Heart right ventricle (tissue), 16 donors: ENCODE measurements at regions of chr10 and their contacts with region 1.

Region 1: DNA sequence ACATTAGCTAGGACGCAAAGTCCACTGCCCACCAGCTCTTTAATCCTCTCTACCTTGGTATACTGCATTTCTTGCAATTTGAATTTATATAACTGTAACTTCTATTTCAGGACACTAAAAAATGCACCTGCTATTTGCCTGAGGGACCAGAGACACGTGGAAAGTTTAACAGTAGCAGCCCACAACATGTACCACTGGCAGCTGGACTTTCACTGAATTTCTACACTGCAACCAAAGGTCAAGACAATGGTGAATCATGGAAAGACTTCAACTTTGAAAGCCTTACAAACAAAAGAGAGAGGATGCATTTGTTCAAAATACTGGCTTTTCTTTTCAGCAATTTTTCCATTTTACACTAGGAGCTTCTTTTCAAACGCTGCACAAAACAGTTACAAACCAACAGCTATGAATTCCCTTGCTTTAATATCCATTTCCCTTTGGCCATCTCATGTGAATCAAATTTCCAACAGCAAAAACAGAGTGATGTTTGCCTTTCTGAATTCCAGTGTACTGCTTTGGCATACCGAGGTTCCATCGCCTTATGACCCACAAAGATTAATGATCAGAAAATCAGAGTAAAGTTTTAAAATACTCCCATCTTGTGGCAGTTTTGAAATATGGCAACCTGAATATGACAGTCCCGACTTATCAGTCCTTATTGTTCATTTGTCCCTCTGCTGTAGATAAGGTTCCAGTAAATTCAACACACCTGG is 29.9 kb upstream of the HNRNPH3 start:
- DNase-seq: no peak
- ATAC-seq: peak in 7 of 8 donors; percentile 52 to 78 (median 70)
- H3K4me3 ChIP-seq: no peak overlapping the region
- H3K27ac ChIP-seq: no peak overlapping the region
- H3K4me1 ChIP-seq: peaks cover 0 to 11% (median 0%) of the 10 kb centered on the region in 9 donors
- H3K27me3 ChIP-seq: no peaks in the 10 kb centered on the region
- CTCF ChIP-seq: peak in 8 of 9 donors; percentile 23 to 67 (median 58)

Region 2: DNA sequence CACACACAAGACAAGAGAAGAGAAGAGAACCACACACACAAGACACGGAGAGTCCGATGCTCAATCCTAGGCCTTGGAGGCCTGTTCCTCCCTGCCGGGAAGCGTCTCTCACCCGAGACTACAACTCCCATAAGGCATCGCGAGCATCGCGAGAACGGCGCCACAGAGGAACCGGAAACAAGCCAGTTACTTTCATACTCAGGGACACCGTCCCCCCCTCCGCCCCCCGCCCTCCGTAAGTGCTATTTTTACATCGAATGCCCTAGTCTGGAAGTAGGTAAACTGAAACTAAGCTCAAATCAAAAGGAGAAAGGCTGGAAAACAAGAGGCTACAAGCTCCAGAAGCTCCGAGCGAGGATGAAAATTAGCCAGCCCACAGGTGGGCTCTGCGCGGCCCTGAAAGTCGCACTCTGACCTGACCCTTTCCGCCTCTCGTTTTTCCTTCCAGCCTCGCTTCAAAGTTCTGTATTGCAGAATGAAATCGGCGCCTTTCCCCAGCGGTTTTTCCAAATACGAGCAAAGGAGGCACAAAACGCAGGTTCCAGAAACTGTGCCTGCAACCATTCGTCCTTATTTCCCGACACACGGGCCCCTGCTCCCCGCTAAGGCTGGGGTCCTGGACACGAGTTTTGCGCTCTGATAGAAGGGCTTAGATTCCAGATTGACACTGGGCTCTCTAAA is 452.5 kb before region 1 on chr10:
- intact Hi-C with region 1: loop called in 4 of 10 experiments (anchors 10 kb)
- DNase-seq: peak; percentile 98
- ATAC-seq: peak; percentile 94 to 100 (median 99)
- H3K4me3 ChIP-seq: peak overlapping the region; percentile 26 to 86 (median 70)
- H3K27ac ChIP-seq: peak overlapping the region; percentile 70 to 99 (median 93)
- H3K4me1 ChIP-seq: peaks cover 0 to 8% (median 6%) of the 10 kb centered on the region in 9 donors
- H3K27me3 ChIP-seq: no peaks in the 10 kb centered on the region
- CTCF ChIP-seq: peak in 1 of 9 donors; percentile 29

Region 3: GRCh38 chr10:67861750-67862460 is 440.0 kb before region 1 on chr10:
- intact Hi-C with region 1: loop called in 6 of 10 experiments (anchors 5 to 10 kb)
- DNase-seq: no peak
- ATAC-seq: no peak
- H3K4me3 ChIP-seq: no peak overlapping the region
- H3K27ac ChIP-seq: no peak overlapping the region
- H3K4me1 ChIP-seq: peaks cover 0 to 4% (median 0%) of the 10 kb centered on the region in 9 donors
- H3K27me3 ChIP-seq: no peaks in the 10 kb centered on the region
- CTCF ChIP-seq: no peak

Region 4: GRCh38 chr10:68082872-68083271 is 219.1 kb before region 1 on chr10:
- intact Hi-C with region 1: loop called in 4 of 10 experiments (anchors 5 to 10 kb)
- DNase-seq: no peak
- ATAC-seq: peak in 2 of 8 donors; percentile 32 to 39
- H3K4me3 ChIP-seq: no peak overlapping the region
- H3K27ac ChIP-seq: peak overlapping the region in 3 of 10 donors; percentile 5 to 50 (median 42)
- H3K4me1 ChIP-seq: peaks cover 0 to 27% (median 0%) of the 10 kb centered on the region in 9 donors
- H3K27me3 ChIP-seq: no peaks in the 10 kb centered on the region
- CTCF ChIP-seq: peak in 8 of 9 donors; percentile 10 to 61 (median 46)

Region 5: GRCh38 chr10:68212721-68213352 is 89.1 kb before region 1 on chr10:
- intact Hi-C with region 1: loop called in 8 of 10 experiments (anchors 2 to 5 kb)
- DNase-seq: no peak
- ATAC-seq: peak in 1 of 8 donors; percentile 11
- H3K4me3 ChIP-seq: no peak overlapping the region
- H3K27ac ChIP-seq: no peak overlapping the region
- H3K4me1 ChIP-seq: no peaks in the 10 kb centered on the region
- H3K27me3 ChIP-seq: no peaks in the 10 kb centered on the region
- CTCF ChIP-seq: peak in 8 of 9 donors; percentile 33 to 69 (median 58)

Region 6: GRCh38 chr10:68231106-68231816 is 70.7 kb before region 1 on chr10:
- intact Hi-C with region 1: loop called in 1 of 10 experiments (anchors 5 kb)
- DNase-seq: peak; percentile 43 to 60
- ATAC-seq: peak; percentile 94 to 98 (median 96)
- H3K4me3 ChIP-seq: peak overlapping the region; percentile 39 to 91 (median 62)
- H3K27ac ChIP-seq: peak overlapping the region in 8 of 10 donors; percentile 45 to 73 (median 64)
- H3K4me1 ChIP-seq: peaks cover 0 to 13% (median 7%) of the 10 kb centered on the region in 9 donors
- H3K27me3 ChIP-seq: peaks cover 0 to 37% (median 2%) of the 10 kb centered on the region in 7 donors
- CTCF ChIP-seq: peak in 2 of 9 donors; percentile 33 to 42

Region 7: DNA sequence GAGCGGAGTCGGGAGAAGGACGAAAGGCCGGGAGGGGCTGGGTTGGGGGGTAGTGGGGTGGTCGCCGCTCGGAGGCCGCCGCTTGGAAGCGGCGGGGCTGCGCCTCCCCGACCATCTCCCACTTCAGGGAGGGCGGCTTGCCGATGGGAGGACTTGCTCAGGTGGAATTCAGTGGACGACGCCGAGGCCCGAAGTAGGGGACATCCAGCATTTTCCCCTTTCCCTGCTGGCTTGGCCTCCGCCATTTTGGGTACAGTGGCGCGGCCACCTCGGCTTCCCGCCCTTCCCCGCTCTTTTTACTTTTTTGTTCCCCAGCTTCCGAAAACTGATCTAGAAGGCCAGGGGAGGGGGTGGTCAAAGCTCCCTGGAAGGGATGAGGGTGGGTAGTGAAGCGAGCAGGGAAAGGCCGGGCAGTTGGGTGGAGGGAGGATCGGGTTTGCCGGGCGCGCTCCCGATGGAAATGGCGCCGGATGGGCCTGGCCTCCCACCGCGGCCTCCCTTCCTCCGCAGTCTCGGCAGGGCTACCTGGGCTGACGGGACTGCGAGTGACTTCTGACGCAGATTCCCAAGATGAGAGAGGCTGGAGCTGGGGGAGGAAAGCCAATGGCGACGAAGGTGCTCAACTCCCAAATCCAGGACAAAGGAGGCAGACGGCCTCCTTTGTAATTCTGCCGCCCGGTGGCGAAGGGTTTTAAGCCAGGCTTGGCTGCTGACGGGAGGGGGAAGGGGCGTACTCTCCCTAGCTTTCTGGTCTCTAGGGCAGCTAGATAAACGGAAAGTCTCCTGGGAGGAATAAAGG is 30.5 kb after region 1 on chr10 and contains the start of gene PBLD:
- intact Hi-C with region 1: no loop called
- DNase-seq: peak; percentile 69 to 79
- ATAC-seq: peak; percentile 28 to 65 (median 52)
- H3K4me3 ChIP-seq: peak within 1 kb of the TSS; percentile 79 to 96 (median 88)
- H3K27ac ChIP-seq: peak within 1 kb of the TSS; percentile 97 to 100 (median 99)
- H3K4me1 ChIP-seq: peaks cover 0 to 78% (median 50%) of the 10 kb centered on the region in 9 donors
- H3K27me3 ChIP-seq: no peaks in the 10 kb centered on the region
- CTCF ChIP-seq: peak in 6 of 9 donors; percentile 20 to 67 (median 50)
- total RNA-seq, gene PBLD: 2.6 to 8.1 (median 6.1) TPM